H1 (cell line): ENCODE measurements at regions of chr1 and their contacts with region 1.

Region 1: GRCh38 chr1:217333939-217334338 is 297.0 kb downstream of the GPATCH2 start:
- DNase-seq: peak; percentile 58 to 83
- H3K4me3 ChIP-seq: no peak overlapping the region
- H3K27ac ChIP-seq: no peak overlapping the region
- H3K4me1 ChIP-seq: no peaks in the 10 kb centered on the region
- H3K27me3 ChIP-seq: no peaks in the 10 kb centered on the region
- CTCF ChIP-seq: peak; percentile 58 to 86 (median 76)
- EP300 ChIP-seq: no peak
- POLR2A ChIP-seq: no peak
- RAD21 ChIP-seq: peak; percentile 90 to 92

Region 2: GRCh38 chr1:217322834-217323233 is 11.1 kb before region 1 on chr1:
- CTCF ChIA-PET with region 1: interaction called, 17 read pairs
- POLR2A ChIA-PET with region 1: no interaction called
- DNase-seq: no peak
- H3K4me3 ChIP-seq: no peak overlapping the region
- H3K27ac ChIP-seq: no peak overlapping the region
- H3K4me1 ChIP-seq: no peaks in the 10 kb centered on the region
- H3K27me3 ChIP-seq: no peaks in the 10 kb centered on the region
- CTCF ChIP-seq: no peak
- EP300 ChIP-seq: no peak
- POLR2A ChIP-seq: no peak
- RAD21 ChIP-seq: no peak

Region 3: DNA sequence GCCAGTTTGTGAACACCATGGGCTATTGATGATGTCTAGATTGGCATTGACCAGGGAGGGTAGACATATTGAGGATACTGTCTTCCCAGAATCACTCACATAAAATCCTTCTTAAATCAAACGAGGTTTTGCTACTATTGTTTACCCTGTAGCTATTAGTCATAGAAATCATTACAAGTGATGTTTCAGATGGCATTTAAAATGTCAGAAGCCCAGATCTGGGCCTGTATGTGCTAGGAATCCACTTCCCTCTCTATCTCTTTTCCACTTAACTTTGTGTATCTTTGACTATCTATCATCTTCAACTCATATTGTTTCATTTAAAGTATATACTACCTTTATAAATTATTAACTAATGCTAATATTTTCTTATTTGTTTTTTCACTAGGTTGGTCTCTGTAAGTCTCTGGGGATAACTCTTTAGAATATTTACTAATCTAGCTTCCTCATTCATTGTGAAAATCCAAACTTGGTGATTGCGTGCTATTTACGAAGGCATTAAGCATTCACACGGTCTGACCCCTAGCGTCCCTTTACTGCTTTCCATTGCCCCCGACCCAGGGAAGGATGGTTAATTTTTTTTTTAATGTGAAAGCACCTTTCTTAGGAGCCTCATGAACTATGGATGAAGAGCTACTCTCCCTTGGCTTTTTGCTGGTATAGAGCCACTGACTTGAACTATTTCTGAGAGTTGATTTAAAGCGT is 15.2 kb after region 1 on chr1:
- CTCF ChIA-PET with region 1: interaction called, 17 read pairs
- POLR2A ChIA-PET with region 1: no interaction called
- DNase-seq: no peak
- H3K4me3 ChIP-seq: no peak overlapping the region
- H3K27ac ChIP-seq: no peak overlapping the region
- H3K4me1 ChIP-seq: peaks cover 0 to 2% (median 0%) of the 10 kb centered on the region in 4 experiments; a peak in 3 of 7 replicates
- H3K27me3 ChIP-seq: no peaks in the 10 kb centered on the region
- CTCF ChIP-seq: no peak
- EP300 ChIP-seq: no peak
- POLR2A ChIP-seq: no peak
- RAD21 ChIP-seq: no peak